Activated CD4-positive, alpha-beta T cell treated with anti-CD3 and anti-CD28 coated beads for 36 hours (primary cell): ENCODE measurements at regions of chr6 and their contacts with region 1.

Region 1: GRCh38 chr6:24991810-24992467 is 56.2 kb upstream of the RIPOR2 start:
- DNase-seq: peak; percentile 83
- ATAC-seq: peak; percentile 91
- H3K4me3 Mint-ChIP-seq: peak overlapping the region; percentile 49
- H3K27ac Mint-ChIP-seq: peak overlapping the region; percentile 82
- H3K4me1 Mint-ChIP-seq: peaks cover 63% of the 10 kb centered on the region
- H3K27me3 Mint-ChIP-seq: no peaks in the 10 kb centered on the region

Region 2: GRCh38 chr6:24614043-24614420 is 377.9 kb before region 1 on chr6:
- CTCF ChIA-PET with region 1: no interaction called
- POLR2A ChIA-PET with region 1: no interaction called
- intact Hi-C with region 1: no loop called
- DNase-seq: no peak
- ATAC-seq: no peak
- H3K4me3 Mint-ChIP-seq: no peak overlapping the region
- H3K27ac Mint-ChIP-seq: no peak overlapping the region
- H3K4me1 Mint-ChIP-seq: no peaks in the 10 kb centered on the region
- H3K27me3 Mint-ChIP-seq: peaks cover 2% of the 10 kb centered on the region

Region 3: DNA sequence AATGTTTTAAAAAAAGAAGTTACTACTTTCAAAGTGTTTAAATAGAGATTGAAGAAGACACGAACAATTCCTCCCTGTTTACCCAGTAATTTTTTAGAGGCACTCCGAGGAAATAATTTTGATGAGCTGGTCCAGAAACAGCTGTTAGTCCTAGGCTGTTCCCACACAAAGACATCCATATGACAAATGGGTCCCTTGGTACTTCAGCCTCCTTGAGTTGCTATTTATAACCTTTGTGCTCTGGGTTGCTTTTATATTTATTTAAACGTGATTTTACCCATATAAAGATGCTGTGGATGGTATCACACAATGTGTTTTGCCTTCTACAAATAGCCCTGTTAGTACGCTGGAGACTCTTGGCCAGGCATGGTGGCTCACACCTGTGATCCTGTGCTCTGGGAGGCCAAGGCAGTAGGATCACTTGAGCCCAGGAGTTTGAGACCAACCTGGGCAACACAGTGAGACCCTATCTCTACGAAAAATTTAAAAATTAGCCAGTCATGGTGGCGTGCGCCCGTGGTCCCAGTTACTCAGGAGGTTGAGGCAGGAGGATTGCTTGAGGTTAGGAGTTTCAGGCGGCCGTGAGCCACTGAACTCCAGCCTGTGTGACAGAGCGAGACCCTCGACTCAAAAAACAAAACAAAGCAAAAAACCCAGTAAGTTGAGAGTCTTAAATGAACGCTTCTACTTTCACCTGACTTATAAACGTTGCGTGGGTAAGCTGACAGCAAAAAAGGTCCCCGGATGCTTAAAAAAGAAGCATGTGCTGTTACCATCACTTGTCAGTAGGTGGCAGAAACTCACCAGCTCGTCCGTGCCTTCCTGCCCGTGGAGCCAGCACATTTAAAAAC is 136.3 kb before region 1 on chr6:
- CTCF ChIA-PET with region 1: interaction called, 140 read pairs
- POLR2A ChIA-PET with region 1: interaction called, 10 read pairs
- intact Hi-C with region 1: loop called (anchors 1 kb)
- DNase-seq: peak; percentile 79
- ATAC-seq: peak; percentile 61
- H3K4me3 Mint-ChIP-seq: peak overlapping the region; percentile 46
- H3K27ac Mint-ChIP-seq: peak overlapping the region; percentile 90
- H3K4me1 Mint-ChIP-seq: peaks cover 52% of the 10 kb centered on the region
- H3K27me3 Mint-ChIP-seq: no peaks in the 10 kb centered on the region

Region 4: GRCh38 chr6:24891004-24891403 is 100.9 kb before region 1 on chr6:
- CTCF ChIA-PET with region 1: interaction called, 12 read pairs
- POLR2A ChIA-PET with region 1: no interaction called
- intact Hi-C with region 1: no loop called
- DNase-seq: peak; percentile 39
- ATAC-seq: peak; percentile 67
- H3K4me3 Mint-ChIP-seq: no peak overlapping the region
- H3K27ac Mint-ChIP-seq: peak overlapping the region; percentile 93
- H3K4me1 Mint-ChIP-seq: peaks cover 87% of the 10 kb centered on the region
- H3K27me3 Mint-ChIP-seq: no peaks in the 10 kb centered on the region

Region 5: DNA sequence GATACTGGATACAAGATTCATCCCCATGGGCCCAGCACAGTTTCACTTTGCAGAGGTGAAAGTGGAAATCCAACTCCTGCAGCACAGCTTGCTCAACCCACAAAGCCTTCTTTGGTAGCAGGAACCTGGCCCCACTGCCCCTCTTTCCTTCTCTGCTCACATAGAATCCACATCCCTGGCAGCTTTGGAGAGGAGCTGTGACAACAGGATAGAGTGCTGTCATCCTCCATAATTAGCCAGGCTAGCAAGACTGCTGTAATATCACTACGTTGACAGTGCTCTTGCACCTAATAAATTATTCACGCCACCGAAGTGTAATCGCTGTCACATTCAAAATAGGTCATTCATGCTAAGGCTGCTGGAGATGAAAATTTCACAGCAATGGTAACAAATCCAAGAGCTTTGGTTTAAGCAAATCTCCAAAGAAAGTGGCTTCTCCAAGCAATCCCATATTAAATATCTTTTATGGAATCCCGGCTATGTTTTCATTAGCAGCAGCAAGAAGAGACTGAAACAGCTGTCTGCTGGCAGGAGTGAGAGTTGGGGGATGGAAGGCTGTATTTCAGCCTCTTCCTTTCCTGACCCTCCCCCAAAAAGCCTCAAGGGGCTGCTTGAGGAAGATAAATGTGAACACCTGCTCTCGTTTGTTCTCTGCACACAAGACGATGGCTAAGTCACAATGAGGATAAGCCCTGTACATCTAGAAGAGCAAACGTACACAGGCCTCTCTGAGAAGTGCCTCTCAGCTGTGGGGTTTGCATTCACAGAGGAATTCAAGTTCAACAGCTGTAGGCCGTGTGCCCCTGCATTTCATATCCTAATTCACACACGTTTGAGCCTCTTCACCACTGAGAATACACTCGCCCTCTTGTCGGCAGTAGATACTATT is 72.7 kb before region 1 on chr6:
- CTCF ChIA-PET with region 1: interaction called, 33 read pairs
- POLR2A ChIA-PET with region 1: interaction called, 4 read pairs
- intact Hi-C with region 1: no loop called
- DNase-seq: peak; percentile 52
- ATAC-seq: peak; percentile 21
- H3K4me3 Mint-ChIP-seq: peak overlapping the region; percentile 55
- H3K27ac Mint-ChIP-seq: peak overlapping the region; percentile 94
- H3K4me1 Mint-ChIP-seq: peaks cover 89% of the 10 kb centered on the region
- H3K27me3 Mint-ChIP-seq: no peaks in the 10 kb centered on the region

Region 6: DNA sequence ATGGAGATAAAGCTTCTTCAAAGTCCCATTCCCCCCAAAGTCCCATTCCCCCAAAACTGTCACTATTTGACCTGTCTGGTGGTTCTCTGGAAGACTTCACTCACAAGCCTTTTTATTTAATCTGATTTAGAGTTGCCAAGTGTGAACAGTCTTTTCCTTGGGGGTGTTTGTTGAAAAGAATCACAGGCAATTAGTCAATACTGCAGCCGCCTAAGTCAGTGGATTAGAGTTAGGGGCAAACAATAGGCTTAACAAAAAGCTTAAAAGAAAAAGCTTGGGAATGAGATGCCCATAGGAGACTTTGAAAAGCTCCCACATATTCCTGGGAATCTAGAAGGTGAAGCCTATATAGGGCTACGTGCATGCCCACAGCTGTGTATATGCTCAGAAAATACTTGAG is 48.2 kb before region 1 on chr6:
- CTCF ChIA-PET with region 1: interaction called, 152 read pairs
- POLR2A ChIA-PET with region 1: no interaction called
- intact Hi-C with region 1: no loop called
- DNase-seq: no peak
- ATAC-seq: no peak
- H3K4me3 Mint-ChIP-seq: no peak overlapping the region
- H3K27ac Mint-ChIP-seq: no peak overlapping the region
- H3K4me1 Mint-ChIP-seq: peaks cover 50% of the 10 kb centered on the region
- H3K27me3 Mint-ChIP-seq: no peaks in the 10 kb centered on the region

Region 7: DNA sequence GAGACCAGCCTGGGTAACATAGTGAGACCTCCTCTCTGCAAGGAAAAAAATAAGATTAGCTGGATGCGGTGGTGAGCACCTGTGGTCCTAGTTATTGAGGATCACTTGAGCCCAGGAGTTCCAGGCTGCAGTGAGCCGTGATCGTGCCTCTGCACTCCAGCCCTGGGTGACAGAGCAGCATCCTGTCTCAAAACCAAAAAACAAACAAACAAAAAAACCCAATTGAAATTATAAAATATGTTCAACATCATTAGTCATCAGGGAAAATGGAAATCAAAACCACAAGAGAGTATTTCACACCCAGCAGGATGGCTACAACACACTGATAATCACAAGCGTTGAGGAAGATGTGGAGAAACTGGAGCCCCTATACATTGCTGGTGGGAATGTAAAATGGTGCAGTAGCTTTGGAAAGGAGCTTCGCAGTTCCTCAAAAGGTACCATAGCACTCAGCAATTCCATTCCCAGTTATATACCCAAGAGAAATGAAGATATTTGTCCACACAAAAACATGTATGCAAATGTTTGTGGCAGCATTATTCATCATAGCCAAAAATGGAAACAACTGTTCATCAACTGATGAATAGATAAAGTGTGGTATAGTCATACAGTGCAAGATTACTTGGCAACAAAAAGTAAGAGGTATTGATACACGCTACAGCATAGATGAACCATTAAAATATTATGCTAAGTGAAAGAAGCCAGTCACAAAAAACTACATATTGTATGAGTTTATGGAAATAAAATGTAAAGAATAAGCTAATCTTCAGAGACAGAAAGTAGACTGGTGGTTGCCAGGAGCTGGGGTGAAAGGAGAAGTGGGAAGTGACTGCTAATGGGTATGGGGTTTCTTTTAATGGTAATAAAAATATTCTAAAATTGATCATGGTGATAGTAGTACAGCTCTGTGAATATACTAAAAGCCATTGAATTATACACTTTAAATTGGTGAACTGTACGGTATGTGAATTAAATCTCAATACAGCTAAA is 17.5 kb before region 1 on chr6:
- CTCF ChIA-PET with region 1: interaction called, 82 read pairs
- POLR2A ChIA-PET with region 1: interaction called, 9 read pairs
- intact Hi-C with region 1: no loop called
- DNase-seq: peak; percentile 60
- ATAC-seq: peak; percentile 92
- H3K4me3 Mint-ChIP-seq: peak overlapping the region; percentile 33
- H3K27ac Mint-ChIP-seq: peak overlapping the region; percentile 86
- H3K4me1 Mint-ChIP-seq: peaks cover 59% of the 10 kb centered on the region
- H3K27me3 Mint-ChIP-seq: no peaks in the 10 kb centered on the region

Region 8: DNA sequence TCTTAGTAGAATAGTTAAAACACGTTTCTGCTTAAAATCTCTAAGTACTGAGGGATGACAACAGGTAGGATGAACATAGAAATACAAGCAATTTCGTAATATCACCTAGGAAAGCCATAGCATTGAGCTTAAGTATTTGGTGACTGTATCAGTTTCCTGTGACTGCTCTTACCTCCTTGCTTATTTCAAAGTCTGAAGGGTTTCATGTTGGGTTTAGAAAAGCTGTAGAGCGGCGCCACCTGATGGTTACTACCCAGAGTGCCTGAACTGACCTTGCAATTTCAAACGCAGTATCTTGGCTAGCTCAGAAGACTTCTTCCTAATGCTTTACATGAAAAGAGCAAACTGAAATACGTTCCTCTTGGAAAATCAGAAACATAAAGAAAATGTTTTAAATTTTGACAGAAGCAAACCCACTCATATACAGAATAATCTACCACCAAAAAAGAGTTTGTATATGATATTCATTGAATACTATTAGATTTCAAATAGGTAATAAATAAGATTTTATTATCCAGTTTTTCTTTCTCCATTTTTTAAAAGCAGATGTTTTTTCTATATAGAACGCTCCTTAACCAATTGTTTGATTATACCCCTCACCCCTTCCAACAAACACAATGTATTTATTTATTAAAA is 26.1 kb after region 1 on chr6:
- CTCF ChIA-PET with region 1: interaction called, 35 read pairs
- POLR2A ChIA-PET with region 1: interaction called, 3 read pairs
- intact Hi-C with region 1: no loop called
- DNase-seq: peak; percentile 91
- ATAC-seq: peak; percentile 78
- H3K4me3 Mint-ChIP-seq: peak overlapping the region; percentile 1
- H3K27ac Mint-ChIP-seq: peak overlapping the region; percentile 74
- H3K4me1 Mint-ChIP-seq: peaks cover 55% of the 10 kb centered on the region
- H3K27me3 Mint-ChIP-seq: no peaks in the 10 kb centered on the region